ENCODE measurements at regions of chr18 and their contacts with region 1.

Region 1: DNA sequence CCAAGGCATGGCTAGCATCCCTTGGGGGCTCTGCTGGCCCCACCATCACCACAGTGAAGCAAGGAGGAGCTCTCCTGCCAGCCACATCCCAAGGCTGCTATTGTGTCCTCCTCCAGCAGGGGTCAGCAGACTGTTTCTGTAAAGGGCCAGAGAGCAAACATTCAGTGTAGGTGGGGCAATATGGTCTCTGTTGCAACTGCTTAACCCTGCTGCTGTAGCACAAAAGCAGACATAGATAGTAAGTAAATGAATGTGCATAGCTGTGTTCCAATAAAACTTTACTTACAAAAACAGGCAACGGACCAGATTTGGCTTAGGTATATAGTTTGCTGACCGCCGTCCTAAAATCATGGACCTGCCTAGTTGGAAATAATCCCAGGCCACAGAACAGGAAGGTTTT is 36.4 kb upstream of the ZBTB7C start:
- DNase-seq: peak; percentile 21 to 64
- ATAC-seq: peak in 1 of 2 donors; percentile 75
- H3K4me3 ChIP-seq: no peak overlapping the region
- H3K27ac ChIP-seq: no peak overlapping the region
- H3K4me1 ChIP-seq: peaks cover 20 to 23% of the 10 kb centered on the region in 2 donors
- H3K27me3 ChIP-seq: no peaks in the 10 kb centered on the region
- CTCF ChIP-seq: peak; percentile 56 to 79 (median 65)
- POLR2A ChIP-seq: no peak

Region 2: DNA sequence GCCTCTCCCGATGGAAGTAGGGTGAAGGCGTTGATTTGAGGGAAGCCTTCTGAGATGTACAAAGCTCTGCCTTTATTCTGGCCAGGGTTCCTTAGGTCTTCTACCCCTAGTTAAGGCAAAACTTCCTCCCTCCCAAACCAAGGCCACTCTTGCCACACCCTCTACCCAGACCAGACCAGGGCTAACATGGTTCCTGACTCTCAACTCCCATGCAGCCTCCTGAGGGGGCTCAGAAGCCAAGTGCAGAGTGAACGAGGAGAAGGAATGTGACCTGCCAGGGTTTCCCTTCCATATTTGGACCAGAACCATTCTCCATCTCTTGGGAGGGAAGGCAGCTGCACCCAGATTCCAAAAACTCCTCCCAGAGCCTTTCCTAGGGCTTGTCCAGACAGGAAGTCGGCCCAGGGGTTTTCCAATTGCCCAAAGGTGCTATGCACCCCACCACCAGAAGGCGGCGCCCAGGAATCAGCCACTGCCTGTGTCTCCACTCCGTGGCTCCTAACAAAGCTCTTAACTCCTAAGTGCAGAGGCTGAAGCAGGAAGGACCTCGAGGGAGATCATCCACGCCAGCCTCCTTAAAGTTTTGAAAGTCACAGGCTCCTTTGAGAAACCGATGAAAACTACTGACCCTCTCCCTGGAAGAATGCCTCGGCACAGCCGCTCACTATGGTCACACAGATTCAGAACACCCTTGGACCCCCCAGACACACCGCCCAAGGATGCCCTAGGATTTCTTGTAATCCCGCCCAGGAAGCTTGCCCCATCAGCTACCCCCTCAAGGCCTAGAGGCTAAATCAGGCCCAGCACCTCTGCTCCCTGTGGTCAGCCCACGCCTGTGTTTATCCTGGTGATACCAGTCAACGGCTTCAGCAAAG is 672.9 kb before region 1 on chr18:
- in situ Hi-C with region 1: loop called in 1 of 4 experiments (anchors 25 kb)
- intact Hi-C with region 1: no loop called
- DNase-seq: peak in 1 of 2 donors; percentile 30
- ATAC-seq: peak in 1 of 2 donors; percentile 53
- H3K4me3 ChIP-seq: no peak overlapping the region
- H3K27ac ChIP-seq: no peak overlapping the region
- H3K4me1 ChIP-seq: no peaks in the 10 kb centered on the region
- H3K27me3 ChIP-seq: no peaks in the 10 kb centered on the region
- CTCF ChIP-seq: peak; percentile 51 to 79 (median 73)
- POLR2A ChIP-seq: no peak

Region 3: DNA sequence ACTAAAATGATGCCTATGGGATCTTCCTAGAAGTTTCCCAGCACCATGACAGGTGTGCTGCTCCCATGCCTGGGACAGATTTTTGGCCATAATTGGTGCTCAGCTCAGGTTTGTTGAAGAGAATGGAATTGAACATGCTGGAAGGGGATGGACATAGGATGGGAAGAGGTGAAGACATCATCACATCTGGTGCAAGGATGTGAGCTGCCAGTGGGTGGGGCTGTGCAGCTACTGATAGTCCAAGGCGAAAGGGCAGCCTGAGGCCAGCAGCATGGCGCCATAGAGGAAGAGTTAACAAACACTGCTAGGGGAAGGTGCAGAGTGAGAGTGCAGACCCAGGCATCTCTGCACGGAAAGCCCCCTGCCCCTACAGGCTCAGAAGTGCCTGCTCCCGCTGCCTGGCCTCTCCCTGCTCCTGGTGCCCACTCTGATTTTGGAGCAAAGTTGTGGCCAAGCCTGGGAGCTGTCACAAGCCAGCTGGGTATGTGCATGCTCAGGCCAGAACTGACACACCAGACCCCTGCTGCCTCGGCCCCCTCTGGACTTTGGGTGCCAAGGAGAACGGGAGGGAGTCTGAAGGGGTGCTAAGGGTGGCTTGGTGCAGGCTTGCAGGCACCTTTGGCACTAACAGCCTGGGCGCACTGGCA is 214.9 kb before region 1 on chr18:
- in situ Hi-C with region 1: loop called (anchors 5 to 10 kb)
- intact Hi-C with region 1: loop called (anchors 1 kb)
- DNase-seq: peak; percentile 27 to 64
- ATAC-seq: peak; percentile 76 to 85
- H3K4me3 ChIP-seq: no peak overlapping the region
- H3K27ac ChIP-seq: no peak overlapping the region
- H3K4me1 ChIP-seq: peaks cover 0 to 5% of the 10 kb centered on the region in 2 donors
- H3K27me3 ChIP-seq: no peaks in the 10 kb centered on the region
- CTCF ChIP-seq: peak; percentile 36 to 65 (median 62)
- POLR2A ChIP-seq: no peak

Region 4: DNA sequence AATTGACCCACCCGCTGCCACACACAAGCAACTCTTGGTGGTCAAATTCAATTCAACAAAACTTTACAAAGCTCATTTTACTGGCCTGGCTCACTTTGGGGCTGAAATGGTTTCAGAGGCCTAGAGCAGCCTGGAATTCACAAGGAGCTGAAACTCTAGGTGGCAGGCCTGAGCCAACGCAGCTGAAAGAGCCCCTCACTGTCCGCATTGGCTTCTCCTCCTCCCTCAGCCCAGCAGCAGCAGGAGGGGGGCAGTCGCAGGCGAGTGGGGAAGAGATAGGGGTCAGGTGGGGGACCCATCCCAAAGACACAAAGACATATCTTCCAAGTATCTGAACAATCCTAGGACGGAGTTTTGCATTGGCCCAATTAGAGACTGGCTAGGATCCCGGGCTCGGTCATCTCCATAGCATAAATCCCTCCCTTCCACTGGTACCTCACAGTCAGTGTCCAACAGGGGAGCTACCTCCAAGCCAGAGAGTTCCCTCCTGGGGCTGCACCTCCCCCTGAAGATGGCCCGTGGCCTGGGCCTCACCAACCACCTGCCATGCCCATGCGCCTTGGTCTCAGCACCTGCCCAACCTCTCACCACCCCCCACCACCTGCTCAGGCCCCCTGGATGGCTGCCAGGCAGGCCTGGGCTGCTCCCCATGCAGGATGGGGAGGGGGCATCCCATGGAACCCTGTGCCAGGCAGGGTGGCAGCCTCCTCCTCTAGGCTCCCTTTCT is 149.8 kb before region 1 on chr18:
- in situ Hi-C with region 1: no loop called
- intact Hi-C with region 1: loop called (anchors 5 kb)
- DNase-seq: no peak
- ATAC-seq: no peak
- H3K4me3 ChIP-seq: no peak overlapping the region
- H3K27ac ChIP-seq: peak overlapping the region in 3 of 4 donors; percentile 78 to 84 (median 84)
- H3K4me1 ChIP-seq: peaks cover 24 to 29% of the 10 kb centered on the region in 2 donors
- H3K27me3 ChIP-seq: no peaks in the 10 kb centered on the region
- CTCF ChIP-seq: peak in 2 of 5 experiments; percentile 13 to 22
- POLR2A ChIP-seq: no peak

Region 5: DNA sequence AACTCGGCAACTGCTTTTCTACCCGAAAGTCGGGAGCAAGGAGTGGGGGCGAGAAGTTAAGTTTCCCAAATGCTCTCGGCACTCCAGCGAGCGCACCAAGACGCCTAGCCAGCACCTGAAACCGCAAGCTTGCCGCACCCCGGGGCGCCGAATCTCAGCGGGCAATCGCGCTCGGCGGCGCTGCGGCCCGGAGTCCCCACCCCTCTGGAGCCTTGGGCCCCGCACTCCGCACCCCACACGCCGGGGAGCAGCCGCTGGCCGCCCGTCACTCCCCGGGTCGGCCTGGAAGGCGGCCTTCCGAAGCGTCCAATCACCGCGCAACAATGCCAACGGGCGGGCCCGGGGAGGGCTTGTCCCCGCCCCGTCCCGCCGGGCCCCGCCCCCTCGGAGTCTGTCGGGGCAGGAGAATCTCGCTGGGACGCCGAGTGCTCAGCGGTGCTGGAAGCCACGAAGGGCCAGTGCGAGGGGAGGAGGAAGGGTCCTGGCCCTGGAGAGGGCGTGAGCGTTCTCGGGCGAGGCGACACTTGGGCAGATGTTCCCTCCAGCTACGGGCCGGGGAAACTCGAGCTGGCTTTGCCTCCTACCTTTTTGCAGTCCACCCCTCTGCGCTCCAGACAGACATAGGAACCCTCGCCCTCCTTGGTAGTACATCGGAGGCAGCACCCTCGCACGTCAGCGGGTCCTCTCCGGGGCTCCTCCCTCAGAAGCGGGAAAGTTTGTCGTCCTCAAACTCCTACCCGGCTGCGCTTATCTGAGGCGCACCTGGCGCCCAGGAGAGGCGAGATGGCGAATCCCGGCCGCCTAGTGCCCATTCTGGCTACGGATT is 35.2 kb before region 1 on chr18:
- in situ Hi-C with region 1: no loop called
- intact Hi-C with region 1: loop called (anchors 2 kb)
- DNase-seq: peak; percentile 84
- ATAC-seq: peak; percentile 85 to 86
- H3K4me3 ChIP-seq: peak overlapping the region; percentile 78 to 88 (median 85)
- H3K27ac ChIP-seq: peak overlapping the region; percentile 71 to 88 (median 78)
- H3K4me1 ChIP-seq: peaks cover 10 to 11% of the 10 kb centered on the region in 2 donors
- H3K27me3 ChIP-seq: peaks cover 21 to 38% (median 27%) of the 10 kb centered on the region in 3 donors
- CTCF ChIP-seq: peak in 1 of 5 experiments; percentile 10
- POLR2A ChIP-seq: peak; percentile 76 to 79

Measured in gastrocnemius medialis (tissue), 4 donors.